ENCODE measurements at regions of chr2 and their contacts with region 1.

Region 1: DNA sequence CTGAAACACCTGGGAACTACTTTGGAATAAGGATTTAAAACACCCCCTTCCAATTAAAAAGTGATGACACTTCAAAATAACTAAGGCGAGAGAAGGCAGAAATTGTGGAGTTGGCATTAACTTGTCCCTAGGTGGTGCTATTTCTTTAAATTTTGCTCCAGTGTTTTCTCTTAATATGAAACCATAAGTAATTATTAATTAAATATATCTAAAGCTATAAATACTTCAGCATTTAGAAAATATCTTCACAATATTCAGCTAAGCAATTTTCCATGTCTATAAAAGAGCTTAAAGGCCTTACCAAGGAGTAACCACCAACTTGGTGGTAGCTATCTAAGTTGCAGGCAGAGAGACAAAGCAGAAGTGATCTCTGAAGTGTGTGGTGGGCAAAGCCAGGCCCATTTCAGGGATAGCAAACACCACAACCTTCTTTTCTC is 186.8 kb upstream of the PGAP1 start:
- DNase-seq: no peak

Region 2: GRCh38 chr2:197079832-197080555 is 33.3 kb before region 1 on chr2:
- intact Hi-C with region 1: loop called (anchors 2 kb)
- DNase-seq: no peak

Region 3: DNA sequence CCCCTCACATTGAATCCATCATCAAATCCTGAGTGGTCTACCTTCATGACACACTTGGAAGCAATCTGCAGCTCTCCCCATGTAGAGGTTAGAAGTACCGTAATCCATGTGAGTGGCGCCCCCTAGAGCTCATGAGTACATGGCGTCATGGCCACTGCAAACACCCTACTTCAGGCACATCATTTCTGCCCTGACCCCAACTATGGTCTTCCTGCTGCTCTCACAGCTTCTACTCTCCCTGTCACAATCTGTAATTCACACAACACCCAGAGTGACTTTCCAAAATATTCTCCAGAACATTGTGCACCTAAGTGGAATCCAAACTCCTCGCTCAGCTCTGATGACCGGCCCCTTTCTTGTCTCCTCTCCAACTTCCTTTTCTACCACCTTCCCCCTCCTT is 55.4 kb after region 1 on chr2:
- intact Hi-C with region 1: loop called (anchors 10 kb)
- DNase-seq: no peak

Region 4: DNA sequence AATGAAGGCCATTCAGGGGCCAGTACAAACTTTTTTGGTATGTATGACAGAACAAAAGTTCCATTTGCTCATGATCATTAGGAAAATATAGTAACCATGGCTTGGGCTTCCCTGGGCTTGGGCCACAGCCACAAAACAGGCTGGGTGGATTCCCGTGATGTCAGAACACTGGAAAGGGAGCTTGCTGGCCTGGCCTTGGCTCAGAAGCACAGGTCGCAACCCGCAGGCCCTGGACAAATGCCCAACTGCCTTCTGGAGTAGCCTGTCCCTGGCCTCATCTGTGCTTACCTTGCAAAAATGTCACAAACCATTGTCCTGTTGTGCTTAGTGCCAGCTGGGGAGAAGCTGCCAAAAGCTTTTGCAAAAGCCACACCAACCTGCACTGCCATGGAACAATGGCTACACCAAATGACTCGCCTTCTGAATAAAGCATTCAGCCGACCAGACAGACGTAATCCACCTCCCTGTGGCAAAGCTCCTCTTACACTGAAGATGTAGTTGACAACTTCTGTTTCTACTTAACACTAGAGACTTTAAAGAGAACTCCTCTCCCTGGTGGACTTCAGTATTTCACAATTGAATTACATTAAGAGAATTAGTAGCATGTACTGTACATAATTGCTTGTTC is 71.8 kb after region 1 on chr2:
- intact Hi-C with region 1: loop called (anchors 5 kb)
- DNase-seq: peak; percentile 90

Region 5: GRCh38 chr2:197310271-197310985 is 197.1 kb after region 1 on chr2 and contains the start of gene ANKRD44:
- intact Hi-C with region 1: loop called (anchors 2 kb)
- DNase-seq: peak; percentile 95
- total RNA-seq, gene ANKRD44: 6.4 TPM

Region 6: GRCh38 chr2:197378494-197379307 is 265.4 kb after region 1 on chr2:
- intact Hi-C with region 1: loop called (anchors 1 kb)
- DNase-seq: no peak

Measured in cardiac septum (tissue), 1 donor.